IMR-90 (cell line): ENCODE measurements at regions of chr3 and their contacts with region 1.

Region 1: DNA sequence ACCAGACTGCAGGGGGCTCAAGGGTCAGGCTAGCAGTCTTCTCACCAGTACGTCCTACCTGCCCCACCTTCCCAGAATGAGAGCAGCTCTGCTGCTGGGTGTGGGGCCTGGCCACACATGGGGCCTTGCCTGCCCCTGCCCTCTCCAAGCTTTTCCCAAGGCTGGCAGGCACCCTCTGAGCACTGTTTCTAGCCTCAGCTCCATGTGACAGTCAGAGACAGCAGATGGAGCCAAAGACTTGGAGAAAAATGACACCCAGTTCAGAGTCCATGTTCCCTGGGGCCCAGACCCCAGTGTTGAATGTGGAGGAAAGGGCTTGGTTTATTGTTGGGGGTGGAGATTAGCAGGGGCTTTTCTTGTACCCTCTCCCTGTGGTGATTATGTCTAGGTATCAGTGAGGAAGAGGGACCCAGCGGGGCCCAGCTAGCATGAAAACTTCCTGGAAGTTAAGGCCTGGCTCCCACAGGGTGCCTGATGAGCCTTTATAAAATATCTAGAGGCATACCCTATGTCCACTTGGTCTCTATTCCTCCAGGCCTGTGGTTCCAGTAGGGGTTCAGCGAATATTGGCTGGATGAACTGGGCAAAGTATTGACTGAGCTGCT is 153.8 kb downstream of the EEFSEC start:
- DNase-seq: no peak
- ATAC-seq: 0 out of 2 replicates have a peak, but pooled peaks have one; percentile 40
- H3K4me3 ChIP-seq: no peak overlapping the region
- H3K27ac ChIP-seq: no peak overlapping the region
- H3K4me1 ChIP-seq: no peaks in the 10 kb centered on the region
- H3K27me3 ChIP-seq: no peaks in the 10 kb centered on the region
- CTCF ChIP-seq: 0 out of 2 replicates have a peak, but pooled peaks have one; percentile 9
- POLR2A ChIP-seq: no peak
- RAD21 ChIP-seq: 0 out of 2 replicates have a peak, but pooled peaks have one; percentile 10

Region 2: GRCh38 chr3:128348805-128349531 is 41.8 kb after region 1 on chr3:
- CTCF ChIA-PET with region 1: no interaction called
- POLR2A ChIA-PET with region 1: no interaction called
- dilution Hi-C with region 1: no loop called
- in situ Hi-C with region 1: no loop called
- intact Hi-C with region 1: loop called (anchors 2 kb)
- DNase-seq: peak; percentile 13
- ATAC-seq: peak; percentile 37; the same call in 1 of the 2 replicates
- H3K4me3 ChIP-seq: no peak overlapping the region
- H3K27ac ChIP-seq: no peak overlapping the region
- H3K4me1 ChIP-seq: peaks cover 8% of the 10 kb centered on the region
- H3K27me3 ChIP-seq: no peaks in the 10 kb centered on the region
- CTCF ChIP-seq: no peak
- POLR2A ChIP-seq: no peak
- RAD21 ChIP-seq: no peak

Region 3: GRCh38 chr3:128378631-128379347 is 71.7 kb after region 1 on chr3:
- CTCF ChIA-PET with region 1: no interaction called
- POLR2A ChIA-PET with region 1: no interaction called
- dilution Hi-C with region 1: no loop called
- in situ Hi-C with region 1: no loop called
- intact Hi-C with region 1: no loop called
- DNase-seq: peak; percentile 85
- ATAC-seq: peak; percentile 84
- H3K4me3 ChIP-seq: no peak overlapping the region
- H3K27ac ChIP-seq: peak overlapping the region; percentile 13; the same call in 1 of the 2 replicates
- H3K4me1 ChIP-seq: peaks cover 19% of the 10 kb centered on the region
- H3K27me3 ChIP-seq: no peaks in the 10 kb centered on the region
- CTCF ChIP-seq: no peak
- POLR2A ChIP-seq: no peak
- RAD21 ChIP-seq: no peak

Region 4: DNA sequence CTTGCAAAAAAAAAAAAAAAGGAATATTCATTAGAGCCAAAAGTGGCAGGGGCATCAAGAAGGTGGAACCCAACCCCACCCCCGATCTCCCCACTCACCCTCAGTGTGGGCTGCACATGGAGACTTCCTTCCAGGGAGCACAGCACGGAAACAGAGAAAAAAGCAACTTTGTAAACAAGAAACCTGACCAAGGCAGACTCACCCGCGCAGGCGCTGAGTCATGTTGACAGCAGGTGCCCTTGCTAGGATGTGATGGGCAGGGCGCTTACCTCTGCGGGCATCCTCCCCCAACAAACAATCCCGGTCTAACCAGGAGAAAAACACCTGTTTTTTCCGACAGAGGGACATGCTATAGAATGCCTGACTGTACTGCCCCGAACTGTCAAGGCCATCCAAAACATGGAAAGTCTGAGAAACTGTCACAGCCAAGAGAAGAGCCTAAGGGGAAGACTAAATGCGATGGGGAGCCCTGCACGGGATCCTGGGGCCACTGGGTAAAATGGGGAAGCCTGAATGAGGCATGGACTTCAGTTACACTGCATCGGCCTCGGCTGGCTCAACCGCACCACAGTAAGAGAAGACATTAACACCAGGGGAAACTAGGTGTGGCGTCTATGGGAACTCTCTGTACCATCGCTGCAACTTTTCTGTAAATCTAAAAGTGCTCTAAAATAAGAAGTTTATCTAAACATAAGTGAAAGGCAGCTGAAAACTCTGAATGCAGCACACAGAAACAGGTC is 252.5 kb after region 1 on chr3:
- CTCF ChIA-PET with region 1: no interaction called
- POLR2A ChIA-PET with region 1: no interaction called
- dilution Hi-C with region 1: no loop called
- in situ Hi-C with region 1: no loop called
- intact Hi-C with region 1: no loop called
- DNase-seq: peak; percentile 17
- ATAC-seq: no peak
- H3K4me3 ChIP-seq: no peak overlapping the region
- H3K27ac ChIP-seq: no peak overlapping the region
- H3K4me1 ChIP-seq: no peaks in the 10 kb centered on the region
- H3K27me3 ChIP-seq: peaks cover 57% of the 10 kb centered on the region
- CTCF ChIP-seq: no peak
- POLR2A ChIP-seq: no peak
- RAD21 ChIP-seq: no peak